H1 (cell line): ENCODE measurements at regions of chr12 and their contacts with region 1.

Region 1: DNA sequence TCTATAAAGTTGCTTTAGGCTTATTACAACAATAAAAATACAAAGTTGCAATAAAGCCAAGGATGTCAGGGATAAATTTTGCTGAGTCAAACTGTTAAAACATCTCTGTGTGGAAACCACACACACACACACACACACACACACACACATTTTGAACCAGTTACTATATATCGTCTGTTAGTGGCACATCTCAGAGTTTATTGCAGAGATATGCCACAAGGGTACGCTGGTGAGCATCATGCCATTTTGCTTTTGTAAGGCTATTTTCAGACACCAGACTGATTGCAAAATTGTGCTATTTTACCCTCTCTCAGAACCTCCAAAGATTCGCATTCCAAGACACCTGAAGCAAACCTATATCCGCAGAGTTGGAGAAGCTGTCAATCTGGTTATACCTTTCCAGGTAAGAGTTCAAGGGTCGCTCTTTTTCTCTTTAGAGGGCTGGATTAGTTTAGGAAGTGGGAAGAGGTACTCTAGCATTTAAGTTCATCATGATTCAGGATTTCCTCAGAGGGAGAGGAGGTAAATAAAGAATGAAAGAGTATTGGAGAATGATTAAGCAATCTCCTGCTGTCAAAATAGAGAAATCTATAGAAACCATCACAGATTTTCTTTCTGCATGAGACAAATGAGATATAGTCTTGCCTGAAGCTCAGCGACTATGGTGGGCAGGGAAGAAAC is 27.3 kb upstream of the CHPT1 start:
- DNase-seq: no peak
- H3K4me3 ChIP-seq: no peak overlapping the region
- H3K27ac ChIP-seq: no peak overlapping the region
- H3K4me1 ChIP-seq: peaks cover 0 to 3% (median 0%) of the 10 kb centered on the region in 4 experiments; a peak in 1 of 7 replicates
- H3K27me3 ChIP-seq: no peaks in the 10 kb centered on the region
- CTCF ChIP-seq: peak in 2 of 3 experiments; percentile 43 to 75; a peak in 3 of 4 replicates
- EP300 ChIP-seq: no peak
- POLR2A ChIP-seq: no peak
- RAD21 ChIP-seq: peak; percentile 57 to 61

Region 2: DNA sequence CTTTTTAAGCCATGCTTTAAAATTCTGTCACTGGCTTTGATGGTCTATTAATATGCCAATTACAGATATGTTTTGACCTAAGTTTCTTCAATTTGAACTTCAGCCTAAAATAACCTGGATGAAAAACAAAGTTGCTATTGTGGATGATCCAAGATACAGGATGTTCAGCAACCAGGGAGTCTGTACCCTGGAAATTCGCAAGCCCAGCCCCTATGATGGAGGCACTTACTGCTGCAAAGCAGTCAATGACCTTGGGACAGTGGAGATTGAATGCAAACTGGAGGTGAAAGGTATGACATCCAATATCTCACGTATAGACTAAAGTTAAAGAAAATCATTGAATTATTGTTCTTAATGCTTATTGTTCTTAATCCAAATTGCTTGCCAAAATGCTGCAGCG is 10.1 kb after region 1 on chr12:
- CTCF ChIA-PET with region 1: interaction called, 32 read pairs
- POLR2A ChIA-PET with region 1: no interaction called
- DNase-seq: no peak
- H3K4me3 ChIP-seq: no peak overlapping the region
- H3K27ac ChIP-seq: no peak overlapping the region
- H3K4me1 ChIP-seq: no peaks in the 10 kb centered on the region
- H3K27me3 ChIP-seq: no peaks in the 10 kb centered on the region
- CTCF ChIP-seq: no peak
- EP300 ChIP-seq: no peak
- POLR2A ChIP-seq: no peak
- RAD21 ChIP-seq: no peak